HCT116 (cell line): ENCODE measurements at regions of chr16 and their contacts with region 1.

Region 1: GRCh38 chr16:50354629-50355456 is 13.9 kb downstream of the BRD7 start:
- DNase-seq: no peak
- ATAC-seq: no peak
- H3K4me3 ChIP-seq: no peak overlapping the region
- H3K27ac ChIP-seq: no peak overlapping the region
- H3K4me1 ChIP-seq: no peaks in the 10 kb centered on the region
- H3K27me3 ChIP-seq: no peaks in the 10 kb centered on the region
- CTCF ChIP-seq: peak; percentile 38 to 69 (median 51); a peak in 5 of 6 replicates
- POLR2A ChIP-seq: no peak
- RAD21 ChIP-seq: peak; percentile 34; the same call in 1 of the 2 replicates

Region 2: DNA sequence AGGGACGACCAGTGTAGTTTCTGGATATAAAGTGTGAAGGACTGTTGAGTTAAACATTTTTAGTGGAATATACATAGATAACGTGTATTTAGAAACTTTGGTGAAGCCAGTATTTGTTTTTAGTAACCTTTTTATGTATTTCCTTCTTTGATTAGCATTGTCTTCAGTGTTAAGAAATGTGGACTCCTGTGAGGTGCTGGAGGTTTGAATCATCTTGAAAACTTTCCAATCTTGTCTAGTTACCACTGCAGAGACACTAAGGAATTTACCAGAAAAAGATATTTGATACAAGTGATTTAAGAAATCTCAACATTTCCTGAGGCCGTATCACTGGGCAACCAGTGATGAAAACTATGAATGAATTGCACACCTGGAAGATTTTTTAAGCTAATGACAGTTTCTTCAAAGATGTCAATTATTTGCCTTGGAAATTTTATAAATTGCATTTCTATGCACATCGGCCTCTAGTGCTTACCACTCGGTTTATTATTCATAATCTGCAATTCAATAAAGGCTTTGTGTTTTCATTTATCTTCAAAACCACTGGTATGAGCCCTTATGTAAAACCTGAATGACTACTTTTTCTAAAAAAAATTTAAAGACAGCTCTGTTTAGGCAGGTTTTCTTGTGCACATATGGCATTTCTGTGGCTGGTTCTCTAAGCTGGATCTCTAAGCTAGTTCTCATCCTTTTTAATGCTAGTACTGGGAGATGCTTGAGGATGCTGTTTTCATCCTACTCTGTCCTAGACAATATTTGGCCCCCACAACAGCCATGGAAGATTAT is 119.9 kb before region 1 on chr16:
- CTCF ChIA-PET with region 1: interaction called, 3 read pairs
- POLR2A ChIA-PET with region 1: no interaction called
- RAD21 ChIA-PET with region 1: no interaction called
- intact Hi-C with region 1: loop called (anchors 5 kb)
- DNase-seq: no peak
- ATAC-seq: no peak
- H3K4me3 ChIP-seq: no peak overlapping the region
- H3K27ac ChIP-seq: no peak overlapping the region
- H3K4me1 ChIP-seq: peaks cover 0 to 4% of the 10 kb centered on the region in 2 experiments; a peak in 1 of 4 replicates
- H3K27me3 ChIP-seq: no peaks in the 10 kb centered on the region
- CTCF ChIP-seq: no peak
- POLR2A ChIP-seq: no peak
- RAD21 ChIP-seq: no peak

Region 3: GRCh38 chr16:50293994-50294765 is 60.7 kb before region 1 on chr16:
- CTCF ChIA-PET with region 1: no interaction called
- POLR2A ChIA-PET with region 1: no interaction called
- RAD21 ChIA-PET with region 1: no interaction called
- intact Hi-C with region 1: no loop called
- DNase-seq: no peak
- ATAC-seq: no peak
- H3K4me3 ChIP-seq: no peak overlapping the region
- H3K27ac ChIP-seq: no peak overlapping the region
- H3K4me1 ChIP-seq: no peaks in the 10 kb centered on the region
- H3K27me3 ChIP-seq: no peaks in the 10 kb centered on the region
- CTCF ChIP-seq: no peak
- POLR2A ChIP-seq: no peak
- RAD21 ChIP-seq: no peak

Region 4: DNA sequence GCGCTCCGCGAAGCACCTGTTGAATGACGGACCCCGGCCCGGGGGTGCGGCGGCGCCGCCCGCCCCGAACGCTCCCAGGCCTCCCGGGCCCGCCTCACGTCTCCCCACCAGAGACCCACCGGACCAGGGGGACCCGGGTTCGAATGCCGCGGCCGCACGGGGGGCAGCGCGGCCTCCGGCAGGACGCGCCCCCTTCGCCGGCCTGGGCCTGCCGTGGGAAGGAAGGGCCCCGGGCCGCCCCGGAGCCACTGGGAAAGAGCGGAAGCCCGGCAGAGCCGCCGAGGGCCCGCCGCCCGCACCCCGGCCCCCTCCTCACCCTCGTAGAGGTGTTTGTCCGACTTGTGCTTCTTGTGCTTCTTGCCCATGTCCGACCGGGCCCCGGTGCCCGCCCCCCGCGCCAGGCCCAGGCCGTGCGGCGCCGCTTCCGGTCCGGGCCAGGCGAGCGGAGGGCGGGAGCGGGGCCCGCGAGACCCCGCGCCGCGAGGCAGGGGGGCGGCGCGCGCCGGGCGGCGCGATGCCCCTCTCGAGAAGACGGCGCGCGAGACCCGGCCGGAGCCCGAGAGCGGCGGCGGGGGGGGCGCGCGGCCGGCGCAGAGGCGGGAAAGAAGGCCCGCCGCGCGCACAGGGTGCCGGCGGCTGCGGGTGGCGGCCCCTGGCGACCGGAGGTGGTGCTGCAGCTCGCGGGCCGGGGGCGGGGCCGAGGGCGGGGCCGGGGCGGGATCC is 13.7 kb after region 1 on chr16 and contains the start of gene BRD7:
- CTCF ChIA-PET with region 1: interaction called, 11 read pairs
- POLR2A ChIA-PET with region 1: no interaction called
- RAD21 ChIA-PET with region 1: no interaction called
- intact Hi-C with region 1: no loop called
- DNase-seq: no peak
- ATAC-seq: peak; percentile 85
- H3K4me3 ChIP-seq: peak within 1 kb of the TSS; percentile 61 to 82
- H3K27ac ChIP-seq: peak within 1 kb of the TSS; percentile 62
- H3K4me1 ChIP-seq: peaks cover 10 to 19% of the 10 kb centered on the region in 2 experiments
- H3K27me3 ChIP-seq: no peaks in the 10 kb centered on the region
- CTCF ChIP-seq: peak in 1 of 3 experiments; percentile 35; a peak in 1 of 6 replicates
- POLR2A ChIP-seq: no peak
- RAD21 ChIP-seq: no peak
- total RNA-seq, gene BRD7: 85.4 TPM